IMR-90 (cell line): ENCODE measurements at regions of chr9 and their contacts with region 1.

Region 1: GRCh38 chr9:14428781-14429230 is 114.9 kb upstream of the NFIB start:
- DNase-seq: peak; percentile 69
- ATAC-seq: peak; percentile 62
- H3K4me3 ChIP-seq: no peak overlapping the region
- H3K27ac ChIP-seq: no peak overlapping the region
- H3K4me1 ChIP-seq: no peaks in the 10 kb centered on the region; the same call in 1 of the 2 replicates
- H3K27me3 ChIP-seq: peaks cover 25% of the 10 kb centered on the region
- CTCF ChIP-seq: peak; percentile 73
- POLR2A ChIP-seq: no peak
- RAD21 ChIP-seq: peak; percentile 63

Region 2: GRCh38 chr9:12702160-12702758 is 1726.5 kb before region 1 on chr9:
- CTCF ChIA-PET with region 1: no interaction called
- POLR2A ChIA-PET with region 1: no interaction called
- dilution Hi-C with region 1: no loop called
- in situ Hi-C with region 1: no loop called
- intact Hi-C with region 1: loop called (anchors 5 kb)
- DNase-seq: peak; percentile 70
- ATAC-seq: peak; percentile 87
- H3K4me3 ChIP-seq: no peak overlapping the region
- H3K27ac ChIP-seq: no peak overlapping the region
- H3K4me1 ChIP-seq: no peaks in the 10 kb centered on the region; the same call in none of the 2 replicates
- H3K27me3 ChIP-seq: no peaks in the 10 kb centered on the region
- CTCF ChIP-seq: peak; percentile 76
- POLR2A ChIP-seq: no peak
- RAD21 ChIP-seq: peak; percentile 80

Region 3: DNA sequence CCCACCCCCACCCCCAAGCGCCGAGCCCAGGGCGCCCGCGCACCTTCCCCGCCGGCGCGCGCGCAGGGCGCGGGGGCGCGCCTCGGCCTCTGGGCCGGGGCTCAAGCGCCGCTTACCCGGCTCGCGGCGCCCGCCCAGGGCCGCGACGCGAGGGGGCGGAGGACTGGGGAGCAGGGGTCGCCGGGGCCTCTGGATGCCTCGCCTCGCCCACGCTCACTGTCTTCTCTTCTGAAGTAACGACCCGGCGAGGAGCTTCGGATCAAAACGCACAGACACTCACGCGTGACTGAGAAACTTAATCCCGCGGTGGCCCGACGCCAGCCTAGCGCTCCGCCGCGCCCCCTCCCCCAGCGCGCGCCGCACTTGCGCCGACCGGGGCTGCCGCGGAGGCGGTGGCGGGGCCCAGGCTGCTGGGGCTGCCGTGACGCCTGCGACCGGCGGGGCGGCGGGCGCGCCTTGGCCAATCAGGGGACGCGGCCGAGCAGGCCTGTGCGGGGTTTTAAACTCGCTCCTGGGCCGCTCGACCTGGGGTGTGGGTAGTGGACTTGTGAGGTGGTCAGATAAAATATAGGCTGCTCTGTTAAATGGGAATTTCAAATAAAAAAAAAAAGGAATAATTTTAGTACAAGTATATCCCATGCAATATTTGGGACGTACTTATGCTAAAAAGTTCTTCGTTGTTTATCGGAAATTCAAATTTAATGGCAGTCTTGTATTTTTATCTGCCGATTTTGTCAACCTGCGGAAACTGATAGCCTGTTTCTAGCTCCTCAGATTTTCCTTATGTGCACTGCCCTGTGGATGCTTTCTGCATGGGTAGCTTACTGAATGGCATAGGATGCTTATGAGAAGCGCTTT is 1149.3 kb before region 1 on chr9 and contains the start of gene MPDZ:
- CTCF ChIA-PET with region 1: no interaction called
- POLR2A ChIA-PET with region 1: no interaction called
- dilution Hi-C with region 1: no loop called
- in situ Hi-C with region 1: no loop called
- intact Hi-C with region 1: loop called (anchors 10 kb)
- DNase-seq: peak; percentile 66
- ATAC-seq: peak; percentile 76
- H3K4me3 ChIP-seq: peak within 1 kb of the TSS; percentile 66
- H3K27ac ChIP-seq: peak within 1 kb of the TSS; percentile 99
- H3K4me1 ChIP-seq: peaks cover 16% of the 10 kb centered on the region
- H3K27me3 ChIP-seq: no peaks in the 10 kb centered on the region
- CTCF ChIP-seq: no peak
- POLR2A ChIP-seq: no peak
- RAD21 ChIP-seq: no peak
- total RNA-seq, gene MPDZ: 39.3 and 46.4 TPM in 2 replicates

Region 4: DNA sequence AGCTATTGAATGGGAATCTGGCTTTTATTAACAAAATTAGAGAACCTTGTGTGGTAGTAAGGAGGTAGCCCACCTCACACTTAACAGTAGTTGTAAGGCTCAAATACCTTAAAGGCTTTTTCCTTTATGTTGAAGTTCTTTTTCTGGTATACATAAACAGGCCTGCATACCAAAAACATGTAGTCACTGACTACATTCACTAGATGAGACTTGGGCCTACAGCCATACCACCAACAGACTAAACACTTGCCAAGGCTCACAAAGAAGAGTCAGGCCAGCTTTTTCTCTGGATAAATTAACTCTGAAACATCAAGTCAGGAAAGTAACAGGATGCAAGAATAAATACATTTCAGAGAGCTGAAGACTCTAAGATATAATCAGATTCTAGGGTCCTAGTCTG is 1070.7 kb before region 1 on chr9:
- CTCF ChIA-PET with region 1: interaction called, 3 read pairs
- POLR2A ChIA-PET with region 1: no interaction called
- dilution Hi-C with region 1: no loop called
- in situ Hi-C with region 1: loop called (anchors 10 kb)
- intact Hi-C with region 1: loop called (anchors 5 kb)
- DNase-seq: peak; percentile 92
- ATAC-seq: peak; percentile 94
- H3K4me3 ChIP-seq: no peak overlapping the region
- H3K27ac ChIP-seq: no peak overlapping the region
- H3K4me1 ChIP-seq: peaks cover 3% of the 10 kb centered on the region; the same call in 1 of the 2 replicates
- H3K27me3 ChIP-seq: no peaks in the 10 kb centered on the region; the same call in 1 of the 2 replicates
- CTCF ChIP-seq: no peak
- POLR2A ChIP-seq: no peak
- RAD21 ChIP-seq: no peak

Region 5: GRCh38 chr9:13942695-13943094 is 486.1 kb before region 1 on chr9:
- CTCF ChIA-PET with region 1: no interaction called
- POLR2A ChIA-PET with region 1: no interaction called
- dilution Hi-C with region 1: no loop called
- in situ Hi-C with region 1: no loop called
- intact Hi-C with region 1: loop called (anchors 10 kb)
- DNase-seq: peak; percentile 98
- ATAC-seq: peak; percentile 91
- H3K4me3 ChIP-seq: no peak overlapping the region
- H3K27ac ChIP-seq: no peak overlapping the region
- H3K4me1 ChIP-seq: peaks cover 4% of the 10 kb centered on the region; the same call in 1 of the 2 replicates
- H3K27me3 ChIP-seq: no peaks in the 10 kb centered on the region
- CTCF ChIP-seq: no peak
- POLR2A ChIP-seq: no peak
- RAD21 ChIP-seq: no peak

Region 6: GRCh38 chr9:14212077-14212476 is 216.7 kb before region 1 on chr9:
- CTCF ChIA-PET with region 1: no interaction called
- POLR2A ChIA-PET with region 1: no interaction called
- dilution Hi-C with region 1: no loop called
- in situ Hi-C with region 1: loop called (anchors 10 kb)
- intact Hi-C with region 1: loop called (anchors 10 kb)
- DNase-seq: peak; percentile 73
- ATAC-seq: peak; percentile 59; the same call in 1 of the 2 replicates
- H3K4me3 ChIP-seq: no peak overlapping the region
- H3K27ac ChIP-seq: no peak overlapping the region
- H3K4me1 ChIP-seq: no peaks in the 10 kb centered on the region
- H3K27me3 ChIP-seq: no peaks in the 10 kb centered on the region
- CTCF ChIP-seq: no peak
- POLR2A ChIP-seq: no peak
- RAD21 ChIP-seq: no peak

Region 7: DNA sequence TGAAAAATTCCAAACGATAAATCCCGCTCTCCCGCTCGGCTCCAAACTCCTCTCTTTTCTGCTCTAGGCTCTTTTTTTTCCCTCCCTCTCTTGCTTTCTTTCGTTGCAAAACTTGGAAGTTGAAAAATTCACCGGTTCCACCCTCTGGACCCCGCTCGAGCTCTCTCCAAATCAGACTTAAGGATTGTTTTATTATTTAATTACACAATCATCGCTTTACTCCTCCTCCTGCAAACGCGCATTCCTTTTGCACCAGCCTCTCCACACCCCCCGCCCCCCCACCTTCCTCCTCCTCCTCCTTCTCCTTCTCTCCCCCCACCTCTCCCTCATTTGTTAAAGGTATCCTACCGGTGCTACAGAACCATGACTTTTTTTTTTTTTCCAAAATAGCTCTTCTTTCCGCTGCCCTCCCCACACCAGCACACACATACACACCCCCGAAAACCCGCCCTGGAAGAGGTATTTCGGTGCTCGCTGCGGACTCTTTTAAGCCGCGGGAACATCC is 114.3 kb before region 1 on chr9:
- CTCF ChIA-PET with region 1: no interaction called
- POLR2A ChIA-PET with region 1: no interaction called
- dilution Hi-C with region 1: no loop called
- in situ Hi-C with region 1: no loop called
- intact Hi-C with region 1: no loop called
- DNase-seq: peak; percentile 66
- ATAC-seq: peak; percentile 13
- H3K4me3 ChIP-seq: peak overlapping the region; percentile 46
- H3K27ac ChIP-seq: no peak overlapping the region
- H3K4me1 ChIP-seq: no peaks in the 10 kb centered on the region; the same call in 1 of the 2 replicates
- H3K27me3 ChIP-seq: peaks cover 61% of the 10 kb centered on the region
- CTCF ChIP-seq: no peak
- POLR2A ChIP-seq: no peak
- RAD21 ChIP-seq: no peak

Region 8: DNA sequence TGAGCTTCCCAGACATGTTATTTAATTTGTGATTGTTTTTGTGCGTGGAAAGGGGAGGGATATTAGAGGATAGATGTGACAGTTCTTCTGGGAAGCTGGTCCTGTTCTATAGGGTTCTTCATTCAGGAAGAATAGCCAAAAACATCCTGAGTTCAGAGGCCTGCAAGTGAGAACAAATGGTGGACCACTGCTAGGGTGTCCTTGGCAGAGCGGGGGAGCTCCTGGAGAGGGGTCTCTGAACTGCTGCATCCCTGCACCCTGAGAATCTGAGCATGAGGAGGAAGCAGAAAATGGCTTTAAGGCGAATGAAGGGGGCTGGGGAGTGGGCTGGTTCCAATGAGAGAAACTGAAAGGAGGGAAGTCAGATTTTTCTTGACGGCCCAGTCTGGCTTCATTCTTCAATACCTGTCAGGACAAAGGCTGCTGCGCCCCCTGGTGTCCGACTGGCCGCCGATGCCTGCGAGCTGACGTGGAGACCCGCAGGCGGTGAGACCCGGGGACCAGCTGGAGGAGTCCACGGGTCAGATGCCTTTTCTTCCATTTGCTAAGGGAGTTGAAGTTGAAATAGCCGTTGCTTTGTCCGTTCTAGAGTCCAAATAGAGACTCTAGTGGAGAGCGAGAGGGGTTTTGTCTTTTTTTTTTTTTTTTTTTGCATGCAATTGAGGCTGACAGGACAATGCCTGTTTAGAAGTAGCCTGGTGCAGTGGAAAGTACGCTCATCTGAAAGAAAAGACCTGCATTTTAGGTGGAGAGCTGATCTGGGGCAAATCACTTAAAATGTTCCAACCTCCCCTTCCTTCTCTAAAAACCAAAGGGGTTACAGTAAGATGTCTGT is 75.4 kb before region 1 on chr9:
- CTCF ChIA-PET with region 1: interaction called, 3 read pairs
- POLR2A ChIA-PET with region 1: no interaction called
- dilution Hi-C with region 1: no loop called
- in situ Hi-C with region 1: no loop called
- intact Hi-C with region 1: loop called (anchors 5 kb)
- DNase-seq: peak; percentile 67
- ATAC-seq: peak; percentile 84
- H3K4me3 ChIP-seq: no peak overlapping the region
- H3K27ac ChIP-seq: no peak overlapping the region
- H3K4me1 ChIP-seq: no peaks in the 10 kb centered on the region; the same call in 1 of the 2 replicates
- H3K27me3 ChIP-seq: peaks cover 80% of the 10 kb centered on the region
- CTCF ChIP-seq: peak; percentile 85
- POLR2A ChIP-seq: no peak
- RAD21 ChIP-seq: peak; percentile 91

Region 9: DNA sequence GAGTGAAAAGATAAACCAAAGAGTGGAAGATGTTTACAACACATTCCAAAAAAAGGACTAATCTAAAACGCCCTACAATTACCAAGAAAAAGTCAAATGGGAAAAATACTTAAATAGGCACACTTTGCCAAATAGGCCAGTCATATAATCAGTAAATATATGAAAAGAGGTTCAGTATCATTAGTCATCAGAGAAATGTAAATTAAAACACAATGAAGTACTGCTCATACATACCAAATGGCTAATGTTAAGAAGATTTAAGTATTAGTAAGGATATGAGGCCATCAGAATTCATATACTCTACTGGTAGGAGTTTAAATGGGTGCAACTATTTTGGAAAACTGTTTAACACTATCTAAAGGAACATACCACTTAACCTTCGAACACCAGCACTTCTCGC is 216.8 kb after region 1 on chr9:
- CTCF ChIA-PET with region 1: no interaction called
- POLR2A ChIA-PET with region 1: no interaction called
- dilution Hi-C with region 1: no loop called
- in situ Hi-C with region 1: no loop called
- intact Hi-C with region 1: no loop called
- DNase-seq: peak; percentile 73
- ATAC-seq: peak; percentile 88
- H3K4me3 ChIP-seq: no peak overlapping the region
- H3K27ac ChIP-seq: no peak overlapping the region
- H3K4me1 ChIP-seq: peaks cover 7% of the 10 kb centered on the region
- H3K27me3 ChIP-seq: no peaks in the 10 kb centered on the region
- CTCF ChIP-seq: no peak
- POLR2A ChIP-seq: no peak
- RAD21 ChIP-seq: no peak